MCF 10A (cell line): ENCODE measurements at regions of chr2 and their contacts with region 1.

Region 1: GRCh38 chr2:28224648-28225472 is 167.8 kb upstream of the FOSL2 start:
- DNase-seq: peak; percentile 66
- H3K4me3 Mint-ChIP-seq: peak overlapping the region; percentile 41
- H3K27ac Mint-ChIP-seq: peak overlapping the region; percentile 93
- H3K4me1 Mint-ChIP-seq: peaks cover 39% of the 10 kb centered on the region
- H3K27me3 Mint-ChIP-seq: no peaks in the 10 kb centered on the region
- CTCF ChIP-seq: no peak

Region 2: GRCh38 chr2:27954771-27955383 is 270.0 kb before region 1 on chr2:
- CTCF ChIA-PET with region 1: no interaction called
- POLR2A ChIA-PET with region 1: interaction called, 12 read pairs
- intact Hi-C with region 1: no loop called
- DNase-seq: peak; percentile 98
- H3K4me3 Mint-ChIP-seq: peak overlapping the region; percentile 2
- H3K27ac Mint-ChIP-seq: peak overlapping the region; percentile 93
- H3K4me1 Mint-ChIP-seq: peaks cover 58% of the 10 kb centered on the region
- H3K27me3 Mint-ChIP-seq: no peaks in the 10 kb centered on the region
- CTCF ChIP-seq: peak; percentile 29

Region 3: GRCh38 chr2:28094739-28095138 is 130.1 kb before region 1 on chr2:
- CTCF ChIA-PET with region 1: no interaction called
- POLR2A ChIA-PET with region 1: no interaction called
- intact Hi-C with region 1: no loop called
- DNase-seq: no peak
- H3K4me3 Mint-ChIP-seq: no peak overlapping the region
- H3K27ac Mint-ChIP-seq: peak overlapping the region; percentile 13
- H3K4me1 Mint-ChIP-seq: peaks cover 5% of the 10 kb centered on the region
- H3K27me3 Mint-ChIP-seq: no peaks in the 10 kb centered on the region
- CTCF ChIP-seq: no peak

Region 4: DNA sequence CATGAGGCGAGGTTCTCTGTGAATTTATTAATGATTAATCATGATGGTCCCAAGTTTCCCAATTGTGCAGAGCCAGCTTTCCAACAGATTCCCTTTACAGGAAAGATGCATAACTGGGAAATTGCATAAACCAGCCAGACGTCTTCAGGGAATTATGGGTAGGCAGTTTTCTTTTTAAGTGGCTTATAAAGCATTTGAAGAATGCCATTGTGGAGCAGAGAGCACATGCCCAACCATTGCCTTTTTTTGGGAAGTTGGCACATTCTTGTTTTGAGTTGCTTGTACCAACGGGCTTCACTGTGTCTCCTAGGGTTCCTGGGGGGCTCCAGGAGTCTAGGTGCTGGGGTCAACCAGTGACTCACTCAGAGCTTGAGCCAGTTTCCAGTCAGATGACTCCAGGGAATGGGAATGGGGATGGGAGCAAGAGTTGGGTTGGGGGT is 63.9 kb before region 1 on chr2:
- CTCF ChIA-PET with region 1: no interaction called
- POLR2A ChIA-PET with region 1: interaction called, 24 read pairs
- intact Hi-C with region 1: no loop called
- DNase-seq: peak; percentile 82
- H3K4me3 Mint-ChIP-seq: no peak overlapping the region
- H3K27ac Mint-ChIP-seq: peak overlapping the region; percentile 89
- H3K4me1 Mint-ChIP-seq: peaks cover 45% of the 10 kb centered on the region
- H3K27me3 Mint-ChIP-seq: no peaks in the 10 kb centered on the region
- CTCF ChIP-seq: no peak

Region 5: GRCh38 chr2:28185891-28186290 is 39.0 kb before region 1 on chr2:
- CTCF ChIA-PET with region 1: no interaction called
- POLR2A ChIA-PET with region 1: interaction called, 51 read pairs
- intact Hi-C with region 1: no loop called
- DNase-seq: peak; percentile 55
- H3K4me3 Mint-ChIP-seq: no peak overlapping the region
- H3K27ac Mint-ChIP-seq: peak overlapping the region; percentile 94
- H3K4me1 Mint-ChIP-seq: peaks cover 16% of the 10 kb centered on the region
- H3K27me3 Mint-ChIP-seq: no peaks in the 10 kb centered on the region
- CTCF ChIP-seq: no peak

Region 6: DNA sequence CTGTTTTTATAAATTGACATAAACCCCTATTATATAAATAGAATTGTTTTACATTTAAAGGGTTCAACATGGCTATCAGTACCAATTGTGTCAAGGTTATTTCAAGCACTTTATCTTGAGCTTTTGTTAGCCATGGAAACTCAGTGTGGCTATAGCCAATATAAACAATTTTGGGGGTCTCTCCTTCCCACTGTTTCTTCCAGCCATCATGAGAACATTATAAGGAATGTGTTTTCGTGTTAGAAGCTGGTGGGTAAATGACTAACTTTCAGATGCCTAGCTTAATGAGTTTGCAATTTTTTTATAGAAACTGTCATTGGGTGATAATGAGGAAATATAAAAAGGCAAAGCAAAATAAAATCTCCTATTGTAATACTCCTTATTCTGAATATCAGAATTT is 14.3 kb after region 1 on chr2:
- CTCF ChIA-PET with region 1: no interaction called
- POLR2A ChIA-PET with region 1: interaction called, 10 read pairs
- intact Hi-C with region 1: no loop called
- DNase-seq: no peak
- H3K4me3 Mint-ChIP-seq: no peak overlapping the region
- H3K27ac Mint-ChIP-seq: no peak overlapping the region
- H3K4me1 Mint-ChIP-seq: no peaks in the 10 kb centered on the region
- H3K27me3 Mint-ChIP-seq: no peaks in the 10 kb centered on the region
- CTCF ChIP-seq: no peak

Region 7: DNA sequence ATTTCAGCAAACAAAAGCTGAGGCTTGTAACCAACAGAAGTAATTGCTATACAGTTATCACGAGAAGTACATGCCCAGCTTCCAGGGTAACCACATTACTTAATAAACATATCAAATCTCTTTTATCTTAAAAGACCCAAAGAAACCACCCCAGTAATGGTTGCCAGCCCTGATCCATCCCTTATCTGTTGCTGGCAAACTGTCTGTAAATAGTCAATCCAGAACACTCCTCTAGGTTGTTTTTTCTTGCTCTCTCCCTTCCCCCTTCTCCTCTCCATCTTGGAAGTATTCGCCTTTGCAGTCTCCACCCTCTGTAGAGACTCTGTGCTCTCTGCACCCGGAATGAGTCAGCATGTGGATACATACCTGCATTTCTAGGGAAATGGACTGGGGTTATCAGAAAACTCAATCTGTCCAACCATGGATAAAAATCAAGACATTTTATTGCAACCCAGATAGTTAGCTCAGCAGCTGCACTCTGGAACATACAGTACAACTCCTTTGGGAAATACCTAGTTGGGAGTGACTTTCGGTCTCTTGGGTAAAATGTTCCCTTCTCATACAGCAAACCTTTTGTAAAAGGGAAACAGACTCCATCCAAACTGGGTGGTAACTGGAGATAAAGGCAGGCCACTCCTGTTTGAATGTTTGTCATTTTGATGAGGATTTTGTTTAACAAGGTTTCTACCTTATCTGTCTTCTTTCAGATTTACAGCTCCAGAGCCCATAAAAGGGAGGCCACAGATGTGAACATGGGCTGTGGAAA is 44.3 kb after region 1 on chr2:
- CTCF ChIA-PET with region 1: interaction called, 4 read pairs
- POLR2A ChIA-PET with region 1: interaction called, 92 read pairs
- intact Hi-C with region 1: no loop called
- DNase-seq: peak; percentile 70
- H3K4me3 Mint-ChIP-seq: peak overlapping the region; percentile 60
- H3K27ac Mint-ChIP-seq: peak overlapping the region; percentile 90
- H3K4me1 Mint-ChIP-seq: peaks cover 45% of the 10 kb centered on the region
- H3K27me3 Mint-ChIP-seq: no peaks in the 10 kb centered on the region
- CTCF ChIP-seq: no peak